ENCODE measurements at regions of chr14 and their contacts with region 1.

Region 1: GRCh38 chr14:23068476-23069412 is 11.4 kb upstream of the CDH24 start:
- DNase-seq: peak; percentile 89
- H3K27ac ChIP-seq: peak overlapping the region; percentile 67
- CTCF ChIP-seq: peak; percentile 98

Region 2: GRCh38 chr14:23057757-23058653 is 10.7 kb before region 1 on chr14:
- CTCF ChIA-PET with region 1: interaction called, 11 read pairs
- POLR2A ChIA-PET with region 1: interaction called, 3 read pairs
- DNase-seq: peak; percentile 84
- H3K27ac ChIP-seq: peak overlapping the region; percentile 95
- CTCF ChIP-seq: peak; percentile 93

Region 3: GRCh38 chr14:23085458-23085857 is 16.7 kb after region 1 on chr14:
- CTCF ChIA-PET with region 1: interaction called, 13 read pairs
- POLR2A ChIA-PET with region 1: no interaction called
- DNase-seq: no peak
- H3K27ac ChIP-seq: no peak overlapping the region
- CTCF ChIP-seq: no peak

Region 4: DNA sequence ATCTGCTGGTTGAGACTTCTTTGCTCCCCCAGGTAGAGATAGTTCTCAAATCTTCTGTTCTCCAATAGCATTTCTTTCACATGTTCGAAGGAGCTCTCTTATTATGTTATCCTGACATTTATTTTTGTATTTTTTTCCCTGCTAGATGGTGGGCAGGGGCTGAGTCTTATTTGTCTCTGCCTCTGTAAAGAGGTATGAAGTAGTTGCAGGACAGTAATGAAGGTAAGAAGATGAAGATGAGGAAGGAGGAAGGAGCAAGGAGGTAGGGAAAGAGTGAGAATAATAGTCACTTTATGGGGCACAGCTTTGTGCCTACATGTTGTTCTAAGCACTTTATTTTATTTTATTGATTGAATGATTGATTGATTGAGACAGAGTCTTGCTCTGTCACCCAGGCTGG is 41.0 kb after region 1 on chr14:
- CTCF ChIA-PET with region 1: interaction called, 16 read pairs
- POLR2A ChIA-PET with region 1: no interaction called
- DNase-seq: no peak
- H3K27ac ChIP-seq: no peak overlapping the region
- CTCF ChIP-seq: no peak

Region 5: DNA sequence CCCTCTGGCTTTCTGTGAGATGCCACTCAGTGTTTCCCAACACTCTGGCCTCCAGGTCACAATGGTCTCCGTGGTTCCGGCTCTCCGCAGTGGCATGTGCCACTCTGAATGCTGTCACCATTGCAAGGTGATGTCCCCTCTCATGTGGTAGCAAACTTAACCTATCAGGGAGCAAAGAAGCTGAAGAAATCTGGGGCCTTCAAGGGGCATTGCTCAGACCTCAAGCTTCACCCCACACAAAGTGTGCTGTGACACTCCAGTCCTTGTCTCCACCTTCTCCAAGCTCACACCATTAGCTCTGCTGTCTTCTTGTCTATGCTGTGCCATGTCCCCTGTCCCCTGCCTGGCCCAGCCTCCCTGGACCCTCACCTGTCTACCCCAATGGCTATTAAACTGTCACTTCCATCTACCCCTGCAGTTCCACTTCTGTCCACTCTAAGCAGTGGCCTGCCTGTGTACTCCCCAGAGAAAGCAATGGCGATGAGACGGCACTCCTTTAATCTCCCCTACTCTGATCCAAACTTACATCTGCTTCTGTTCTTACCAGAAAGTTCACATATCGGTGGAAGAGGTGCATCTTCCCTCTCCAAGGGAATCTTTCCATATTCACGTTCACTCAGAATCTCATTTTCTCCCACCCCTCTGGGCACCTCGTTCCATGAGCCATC is 661.1 kb after region 1 on chr14:
- CTCF ChIA-PET with region 1: no interaction called
- POLR2A ChIA-PET with region 1: no interaction called
- DNase-seq: no peak
- H3K27ac ChIP-seq: no peak overlapping the region
- CTCF ChIP-seq: no peak

Measured in RWPE1 (cell line).